B cell (primary cell): ENCODE measurements at regions of chr5 and their contacts with region 1.

Region 1: GRCh38 chr5:69166686-69167492 is at the start of gene CCNB1:
- DNase-seq: peak; percentile 97
- ATAC-seq: peak; percentile 100
- H3K4me3 ChIP-seq: peak within 1 kb of the TSS; percentile 32 to 89 (median 84)
- H3K4me3 Mint-ChIP-seq: peak within 1 kb of the TSS; percentile 97
- H3K27ac ChIP-seq: peak within 1 kb of the TSS; percentile 55 to 74
- H3K27ac Mint-ChIP-seq: peak within 1 kb of the TSS; percentile 95
- H3K4me1 ChIP-seq: peaks cover 10 to 17% of the 10 kb centered on the region in 2 donors
- H3K4me1 Mint-ChIP-seq: peaks cover 22% of the 10 kb centered on the region
- H3K27me3 ChIP-seq: no peaks in the 10 kb centered on the region
- H3K27me3 Mint-ChIP-seq: no peaks in the 10 kb centered on the region
- CTCF ChIP-seq: no peak
- total RNA-seq, gene CCNB1: 8.5 and 8.6 TPM in 2 replicates

Region 2: GRCh38 chr5:69042915-69043658 is 123.8 kb before region 1 on chr5:
- CTCF ChIA-PET with region 1: no interaction called
- POLR2A ChIA-PET with region 1: no interaction called
- intact Hi-C with region 1: loop called (anchors 2 kb)
- DNase-seq: peak; percentile 93
- ATAC-seq: peak; percentile 95
- H3K4me3 ChIP-seq: peak overlapping the region; percentile 43 to 81 (median 63)
- H3K4me3 Mint-ChIP-seq: peak overlapping the region; percentile 90
- H3K27ac ChIP-seq: peak overlapping the region; percentile 51 to 82
- H3K27ac Mint-ChIP-seq: peak overlapping the region; percentile 91
- H3K4me1 ChIP-seq: peaks cover 0 to 4% of the 10 kb centered on the region in 2 donors
- H3K4me1 Mint-ChIP-seq: peaks cover 6% of the 10 kb centered on the region
- H3K27me3 ChIP-seq: no peaks in the 10 kb centered on the region
- H3K27me3 Mint-ChIP-seq: no peaks in the 10 kb centered on the region
- CTCF ChIP-seq: peak; percentile 90

Region 3: DNA sequence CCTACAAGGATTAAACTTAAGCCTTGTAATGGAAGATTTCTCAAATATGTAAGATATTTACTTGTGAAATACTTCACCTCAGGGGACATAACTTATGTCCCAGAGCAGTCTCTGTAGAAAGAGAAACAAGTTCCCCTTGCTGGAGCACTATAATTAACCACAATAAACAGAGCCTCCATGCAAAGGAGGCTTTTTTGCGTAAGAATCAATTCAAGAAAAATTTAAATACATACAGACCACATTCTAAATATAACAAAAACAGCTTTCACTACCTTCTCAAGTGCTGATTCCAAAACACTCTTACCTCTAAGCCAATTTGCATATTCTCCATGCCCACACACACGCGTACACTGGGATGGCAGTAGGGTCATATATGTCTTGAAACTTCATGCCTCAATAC is 30.6 kb before region 1 on chr5:
- CTCF ChIA-PET with region 1: no interaction called
- POLR2A ChIA-PET with region 1: interaction called, 4 read pairs
- intact Hi-C with region 1: loop called (anchors 1 kb)
- DNase-seq: peak; percentile 64
- ATAC-seq: peak; percentile 87
- H3K4me3 ChIP-seq: no peak overlapping the region
- H3K4me3 Mint-ChIP-seq: peak overlapping the region; percentile 63
- H3K27ac ChIP-seq: peak overlapping the region; percentile 41 to 45
- H3K27ac Mint-ChIP-seq: peak overlapping the region; percentile 90
- H3K4me1 ChIP-seq: peaks cover 5 to 18% of the 10 kb centered on the region in 2 donors
- H3K4me1 Mint-ChIP-seq: peaks cover 29% of the 10 kb centered on the region
- H3K27me3 ChIP-seq: no peaks in the 10 kb centered on the region
- H3K27me3 Mint-ChIP-seq: no peaks in the 10 kb centered on the region
- CTCF ChIP-seq: no peak

Region 4: GRCh38 chr5:69217548-69218526 is 50.9 kb after region 1 on chr5:
- CTCF ChIA-PET with region 1: no interaction called
- POLR2A ChIA-PET with region 1: interaction called, 4 read pairs
- intact Hi-C with region 1: loop called (anchors 1 kb)
- DNase-seq: peak; percentile 95
- ATAC-seq: peak; percentile 90
- H3K4me3 ChIP-seq: peak overlapping the region; percentile 85 to 100 (median 97)
- H3K4me3 Mint-ChIP-seq: peak overlapping the region; percentile 99
- H3K27ac ChIP-seq: peak overlapping the region; percentile 93 to 94
- H3K27ac Mint-ChIP-seq: peak overlapping the region; percentile 98
- H3K4me1 ChIP-seq: peaks cover 8 to 17% of the 10 kb centered on the region in 2 donors
- H3K4me1 Mint-ChIP-seq: peaks cover 20% of the 10 kb centered on the region
- H3K27me3 ChIP-seq: no peaks in the 10 kb centered on the region
- H3K27me3 Mint-ChIP-seq: no peaks in the 10 kb centered on the region
- CTCF ChIP-seq: no peak

Region 5: DNA sequence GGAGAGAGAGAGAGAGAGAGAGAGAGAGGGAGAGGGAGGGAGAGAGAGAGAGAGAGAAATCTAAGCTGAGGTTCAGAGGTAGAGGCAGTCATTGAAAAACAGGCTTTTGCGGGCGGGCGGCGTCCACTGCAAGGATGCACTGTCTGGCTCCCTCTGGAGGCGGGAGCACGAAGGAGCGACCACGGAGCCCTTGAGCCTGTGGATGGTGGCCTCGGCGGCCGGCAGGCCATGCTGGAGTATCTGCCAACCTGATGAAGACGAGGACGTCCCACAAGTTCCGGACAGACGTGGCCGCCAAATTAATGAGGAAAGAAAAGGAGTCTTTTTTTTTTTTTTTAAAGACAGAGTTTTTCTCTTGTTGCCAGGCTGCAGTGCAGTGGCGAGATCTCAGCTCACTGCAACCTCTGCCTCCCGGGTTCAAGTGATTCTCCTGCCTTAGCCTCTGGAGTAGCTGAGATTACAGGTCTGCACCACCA is 167.9 kb after region 1 on chr5:
- CTCF ChIA-PET with region 1: interaction called, 3 read pairs
- POLR2A ChIA-PET with region 1: no interaction called
- intact Hi-C with region 1: loop called (anchors 1 kb)
- DNase-seq: peak; percentile 78
- ATAC-seq: peak; percentile 67
- H3K4me3 ChIP-seq: no peak overlapping the region
- H3K4me3 Mint-ChIP-seq: peak overlapping the region; percentile 30
- H3K27ac ChIP-seq: no peak overlapping the region
- H3K27ac Mint-ChIP-seq: peak overlapping the region; percentile 56
- H3K4me1 ChIP-seq: peaks cover 10 to 17% of the 10 kb centered on the region in 2 donors
- H3K4me1 Mint-ChIP-seq: peaks cover 15% of the 10 kb centered on the region
- H3K27me3 ChIP-seq: no peaks in the 10 kb centered on the region
- H3K27me3 Mint-ChIP-seq: no peaks in the 10 kb centered on the region
- CTCF ChIP-seq: peak; percentile 62